ENCODE measurements at regions of chr5 and their contacts with region 1.

Region 1: GRCh38 chr5:135356522-135357318 is 42.3 kb downstream of the MACROH2A1 start:
- DNase-seq: peak; percentile 61 to 77
- ATAC-seq: peak; percentile 81 to 87
- H3K4me3 ChIP-seq: no peak overlapping the region
- H3K27ac ChIP-seq: peak overlapping the region; percentile 56 to 74 (median 73)
- H3K4me1 ChIP-seq: peaks cover 48 to 51% of the 10 kb centered on the region in 2 donors
- H3K27me3 ChIP-seq: no peaks in the 10 kb centered on the region
- CTCF ChIP-seq: no peak
- POLR2A ChIP-seq: no peak

Region 2: DNA sequence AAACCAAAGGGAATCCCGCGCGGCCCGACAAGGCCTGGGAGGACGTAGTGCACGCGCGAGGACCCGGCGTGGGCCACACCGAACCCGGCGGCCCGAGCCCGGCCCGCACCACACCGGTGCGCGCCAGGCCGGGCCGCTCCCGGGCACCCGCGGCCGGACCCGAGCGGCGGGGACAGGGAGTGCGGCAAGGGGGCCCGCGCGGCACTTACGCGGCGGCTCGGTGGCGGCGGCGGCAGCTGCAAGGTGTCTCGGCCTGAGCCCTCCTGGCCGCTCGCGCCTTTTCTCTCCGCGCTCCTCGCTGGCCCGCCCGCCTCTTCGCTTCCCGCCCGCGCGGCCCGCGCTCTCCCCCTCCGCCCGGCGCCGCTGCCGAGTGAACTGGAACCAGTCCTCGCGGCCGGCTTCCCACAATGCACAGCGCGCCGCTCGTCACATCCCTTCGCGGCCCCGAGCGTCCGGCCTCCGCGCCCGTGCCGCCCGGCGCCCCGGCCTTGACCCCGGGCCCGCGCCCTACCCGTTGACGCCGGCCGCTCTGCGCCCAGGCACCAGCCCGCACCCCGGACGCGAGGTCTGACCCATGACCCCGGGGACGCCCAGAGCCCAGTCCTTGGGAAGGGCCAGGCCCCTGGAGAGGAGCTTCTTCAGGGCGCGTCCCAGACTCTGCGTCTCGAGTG is 42.3 kb after region 1 on chr5 and contains the start of gene MACROH2A1:
- in situ Hi-C with region 1: no loop called
- intact Hi-C with region 1: loop called (anchors 2 kb)
- DNase-seq: peak; percentile 70 to 84
- ATAC-seq: peak; percentile 80 to 93
- H3K4me3 ChIP-seq: peak within 1 kb of the TSS; percentile 70 to 96 (median 81)
- H3K27ac ChIP-seq: peak within 1 kb of the TSS; percentile 76 to 93 (median 82)
- H3K4me1 ChIP-seq: peaks cover 39 to 46% of the 10 kb centered on the region in 2 donors
- H3K27me3 ChIP-seq: no peaks in the 10 kb centered on the region
- CTCF ChIP-seq: peak in 4 of 5 experiments; percentile 10 to 29 (median 15)
- POLR2A ChIP-seq: peak; percentile 95 to 97
- total RNA-seq, gene MACROH2A1: 104 to 167 (median 136) TPM

Region 3: DNA sequence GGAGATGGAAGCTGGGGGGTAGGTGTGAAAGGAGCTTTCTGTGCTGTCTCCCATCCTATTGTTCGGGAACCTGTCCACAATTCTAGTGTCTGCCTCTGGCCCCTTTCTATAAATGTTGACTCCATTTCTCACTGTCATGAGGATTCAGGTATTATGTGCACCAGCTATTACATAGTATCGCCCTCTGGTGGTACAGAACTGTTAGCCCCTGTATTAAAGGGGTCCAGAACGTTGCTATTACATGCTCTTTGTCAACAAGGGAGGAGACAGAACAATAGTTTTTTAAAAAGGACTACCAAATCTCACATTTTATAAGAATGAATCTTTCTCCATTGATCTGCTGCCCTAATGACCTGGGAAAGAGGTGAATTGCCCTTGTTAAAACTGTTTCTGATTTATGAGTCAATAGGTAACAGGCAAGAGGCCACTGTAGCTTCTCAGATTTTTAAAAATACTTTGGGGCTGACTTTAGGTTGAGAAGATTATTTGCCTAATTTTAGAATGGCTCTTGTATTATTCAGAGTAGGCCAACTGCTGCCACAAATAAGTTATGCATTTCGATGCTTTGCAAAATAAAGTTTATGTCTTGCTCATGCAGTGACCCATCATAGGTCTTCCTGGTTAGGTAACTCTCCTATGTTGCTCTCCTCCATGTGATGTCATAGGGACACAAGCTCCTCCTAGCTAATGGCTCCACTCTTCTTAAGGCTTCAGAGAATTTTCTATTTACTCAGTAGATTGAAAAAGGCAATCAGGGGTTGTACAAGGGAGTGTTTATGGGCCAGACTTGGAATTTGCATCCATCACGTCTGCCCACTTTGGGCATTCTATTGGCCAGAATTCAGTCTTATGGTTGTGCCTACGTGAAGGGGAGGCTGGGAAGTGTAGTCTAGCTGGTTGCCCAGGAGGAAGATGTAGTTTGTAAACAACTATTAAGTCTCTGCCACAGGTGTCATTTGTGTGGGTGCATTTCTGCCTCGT is 69.7 kb after region 1 on chr5:
- in situ Hi-C with region 1: loop called in 1 of 4 experiments (anchors 5 kb)
- intact Hi-C with region 1: loop called (anchors 5 kb)
- DNase-seq: no peak
- ATAC-seq: peak; percentile 57 to 94
- H3K4me3 ChIP-seq: no peak overlapping the region
- H3K27ac ChIP-seq: peak overlapping the region in 1 of 4 donors; percentile 7
- H3K4me1 ChIP-seq: peaks cover 9 to 10% of the 10 kb centered on the region in 2 donors
- H3K27me3 ChIP-seq: no peaks in the 10 kb centered on the region
- CTCF ChIP-seq: peak; percentile 64 to 72 (median 68)
- POLR2A ChIP-seq: no peak

Measured in gastrocnemius medialis (tissue), 4 donors.